Mammary epithelial cell (primary cell): ENCODE measurements at regions of chr3 and their contacts with region 1.

Region 1: DNA sequence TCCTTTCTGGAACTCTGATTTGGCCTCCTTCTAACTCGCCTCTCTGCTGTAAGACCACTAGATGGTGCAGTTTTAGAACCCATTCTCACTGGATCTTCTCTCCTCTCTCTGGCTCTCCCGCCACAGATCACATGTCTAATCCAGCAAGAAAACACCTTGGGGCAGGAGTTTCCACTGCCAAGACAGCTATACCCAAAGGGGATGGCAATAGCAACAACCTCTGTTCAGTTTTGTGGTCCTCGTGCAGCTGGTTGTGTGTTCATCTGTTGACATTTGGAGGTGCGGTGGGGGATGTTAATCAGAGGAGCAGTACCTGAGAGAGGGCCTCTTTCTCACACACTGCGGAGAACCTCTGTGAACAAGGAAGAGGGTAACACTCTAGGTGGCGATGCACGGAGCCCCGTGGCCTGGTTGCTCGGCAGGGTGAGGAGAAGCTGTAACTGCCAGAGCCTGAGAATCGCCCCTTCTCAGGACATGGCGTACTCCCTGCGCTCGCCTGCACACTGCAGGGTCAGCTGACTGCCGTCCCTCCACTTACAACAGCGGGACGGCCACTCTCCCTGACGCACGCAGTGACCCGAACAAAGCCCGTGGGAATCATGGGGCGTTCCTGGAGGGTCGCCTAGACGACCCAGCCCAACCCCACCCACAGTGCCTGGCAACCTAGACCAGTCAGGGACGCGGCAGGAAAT is at the start of gene TEX55:
- DNase-seq: peak; percentile 66
- H3K4me3 ChIP-seq: no peak within 1 kb of the TSS
- H3K27ac ChIP-seq: no peak within 1 kb of the TSS
- H3K4me1 ChIP-seq: peaks cover 15% of the 10 kb centered on the region
- H3K27me3 ChIP-seq: no peaks in the 10 kb centered on the region
- CTCF ChIP-seq: peak; percentile 83 to 88
- total RNA-seq, gene TEX55: not detected

Region 2: GRCh38 chr3:118977671-118978392 is 167.8 kb before region 1 on chr3:
- CTCF ChIA-PET with region 1: no interaction called
- dilution Hi-C with region 1: no loop called
- in situ Hi-C with region 1: no loop called
- intact Hi-C with region 1: no loop called
- DNase-seq: no peak
- H3K4me3 ChIP-seq: no peak overlapping the region
- H3K27ac ChIP-seq: no peak overlapping the region
- H3K4me1 ChIP-seq: no peaks in the 10 kb centered on the region
- H3K27me3 ChIP-seq: peaks cover 1% of the 10 kb centered on the region
- CTCF ChIP-seq: no peak

Region 3: GRCh38 chr3:119104031-119104430 is 41.6 kb before region 1 on chr3:
- CTCF ChIA-PET with region 1: no interaction called
- dilution Hi-C with region 1: no loop called
- in situ Hi-C with region 1: no loop called
- intact Hi-C with region 1: no loop called
- DNase-seq: no peak
- H3K4me3 ChIP-seq: no peak overlapping the region
- H3K27ac ChIP-seq: no peak overlapping the region
- H3K4me1 ChIP-seq: no peaks in the 10 kb centered on the region
- H3K27me3 ChIP-seq: peaks cover 3% of the 10 kb centered on the region
- CTCF ChIP-seq: no peak

Region 4: GRCh38 chr3:119184796-119185570 is 39.3 kb after region 1 on chr3:
- CTCF ChIA-PET with region 1: no interaction called
- dilution Hi-C with region 1: no loop called
- in situ Hi-C with region 1: no loop called
- intact Hi-C with region 1: loop called (anchors 5 kb)
- DNase-seq: peak; percentile 88
- H3K4me3 ChIP-seq: no peak overlapping the region
- H3K27ac ChIP-seq: peak overlapping the region; percentile 74
- H3K4me1 ChIP-seq: peaks cover 40% of the 10 kb centered on the region
- H3K27me3 ChIP-seq: no peaks in the 10 kb centered on the region
- CTCF ChIP-seq: no peak

Region 5: GRCh38 chr3:119194237-119195150 is 48.8 kb after region 1 on chr3:
- CTCF ChIA-PET with region 1: no interaction called
- dilution Hi-C with region 1: no loop called
- in situ Hi-C with region 1: no loop called
- intact Hi-C with region 1: loop called (anchors 1 kb)
- DNase-seq: peak; percentile 40
- H3K4me3 ChIP-seq: no peak overlapping the region
- H3K27ac ChIP-seq: no peak overlapping the region
- H3K4me1 ChIP-seq: peaks cover 26% of the 10 kb centered on the region
- H3K27me3 ChIP-seq: no peaks in the 10 kb centered on the region
- CTCF ChIP-seq: no peak

Region 6: DNA sequence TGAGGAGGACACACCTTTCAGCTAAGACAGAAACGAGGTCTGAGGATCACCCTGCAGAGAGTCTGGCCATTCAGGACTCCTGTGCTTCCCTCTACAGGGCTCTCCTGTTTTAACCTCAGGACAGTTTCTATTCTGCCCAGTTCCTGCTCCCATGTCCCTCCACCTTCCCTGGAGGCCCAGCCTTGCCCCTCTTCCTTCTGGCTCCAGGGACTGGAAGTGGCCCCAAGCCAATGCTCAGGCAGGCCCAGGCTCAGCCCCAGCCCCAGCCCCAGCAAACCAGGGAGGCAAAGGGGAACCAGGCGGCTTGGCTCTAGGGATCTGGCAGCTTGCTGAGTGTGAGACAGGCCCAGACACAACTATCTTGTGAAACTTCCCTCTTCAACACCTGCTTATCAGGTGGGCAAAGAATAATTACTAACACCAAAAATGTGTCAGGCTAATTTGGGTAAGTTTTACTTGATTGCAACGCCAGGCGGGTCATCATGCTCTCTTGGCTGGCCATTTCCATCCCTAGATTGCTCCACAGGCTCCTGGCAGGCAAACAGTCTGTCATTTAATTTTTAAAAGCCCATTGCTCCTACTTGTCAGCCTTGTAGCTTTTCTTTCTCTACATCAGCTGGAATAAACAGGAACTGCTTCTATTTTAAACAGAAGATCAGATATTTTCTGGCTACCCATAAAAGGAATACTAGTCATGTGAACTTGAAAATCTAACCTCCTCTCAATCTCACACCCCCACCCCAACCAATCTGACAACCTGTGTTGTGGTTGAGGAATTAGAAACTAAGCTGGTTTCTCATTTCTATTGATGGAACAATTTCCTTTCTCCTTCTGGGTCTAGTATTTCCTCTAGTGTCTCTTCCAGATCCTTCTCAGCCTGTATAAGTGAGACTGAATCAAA is 61.2 kb after region 1 on chr3:
- CTCF ChIA-PET with region 1: no interaction called
- dilution Hi-C with region 1: no loop called
- in situ Hi-C with region 1: no loop called
- intact Hi-C with region 1: loop called (anchors 1 kb)
- DNase-seq: peak; percentile 61
- H3K4me3 ChIP-seq: no peak overlapping the region
- H3K27ac ChIP-seq: peak overlapping the region; percentile 3
- H3K4me1 ChIP-seq: peaks cover 18% of the 10 kb centered on the region
- H3K27me3 ChIP-seq: no peaks in the 10 kb centered on the region
- CTCF ChIP-seq: peak in 1 of 2 donors; percentile 41

Region 7: GRCh38 chr3:119221839-119222238 is 76.2 kb after region 1 on chr3:
- CTCF ChIA-PET with region 1: no interaction called
- dilution Hi-C with region 1: no loop called
- in situ Hi-C with region 1: no loop called
- intact Hi-C with region 1: loop called (anchors 5 kb)
- DNase-seq: no peak
- H3K4me3 ChIP-seq: no peak overlapping the region
- H3K27ac ChIP-seq: no peak overlapping the region
- H3K4me1 ChIP-seq: no peaks in the 10 kb centered on the region
- H3K27me3 ChIP-seq: no peaks in the 10 kb centered on the region
- CTCF ChIP-seq: no peak